ENCODE measurements at regions of chr2 and their contacts with region 1.

Region 1: DNA sequence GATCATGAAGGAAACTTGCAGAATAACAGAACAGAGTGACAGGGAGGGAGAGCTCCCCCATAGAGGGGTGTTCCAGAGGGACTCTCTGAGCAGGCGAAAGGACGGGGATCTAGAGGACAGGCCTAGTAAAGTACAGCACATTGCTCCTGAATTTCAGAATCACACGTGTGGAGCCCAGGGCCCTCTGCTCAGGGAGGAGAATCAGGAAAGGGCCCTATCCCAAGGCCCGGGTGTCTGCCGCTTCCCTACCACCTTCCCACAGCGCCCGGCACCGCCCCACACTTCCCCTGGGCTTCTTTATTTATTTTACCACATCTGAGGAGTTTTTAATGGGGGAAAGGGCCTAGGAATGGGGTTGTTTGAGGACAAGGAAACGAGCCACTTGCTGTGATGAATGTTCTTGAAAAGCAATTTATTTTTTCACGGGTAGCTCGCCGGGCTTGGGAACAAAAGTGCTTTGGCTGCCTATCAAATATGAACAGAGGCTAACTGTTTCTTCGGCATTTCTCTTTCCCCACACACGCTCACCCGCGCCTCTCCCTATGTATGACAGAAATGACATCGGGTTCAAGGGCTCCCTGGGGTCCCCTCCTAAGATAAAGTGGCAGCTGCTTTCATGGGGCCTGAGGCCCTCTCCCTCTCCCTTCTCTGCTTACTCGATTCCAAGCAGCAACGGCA is 79.3 kb upstream of the GLI2 start:
- DNase-seq: peak in 1 of 10 donors; percentile 50

Region 2: DNA sequence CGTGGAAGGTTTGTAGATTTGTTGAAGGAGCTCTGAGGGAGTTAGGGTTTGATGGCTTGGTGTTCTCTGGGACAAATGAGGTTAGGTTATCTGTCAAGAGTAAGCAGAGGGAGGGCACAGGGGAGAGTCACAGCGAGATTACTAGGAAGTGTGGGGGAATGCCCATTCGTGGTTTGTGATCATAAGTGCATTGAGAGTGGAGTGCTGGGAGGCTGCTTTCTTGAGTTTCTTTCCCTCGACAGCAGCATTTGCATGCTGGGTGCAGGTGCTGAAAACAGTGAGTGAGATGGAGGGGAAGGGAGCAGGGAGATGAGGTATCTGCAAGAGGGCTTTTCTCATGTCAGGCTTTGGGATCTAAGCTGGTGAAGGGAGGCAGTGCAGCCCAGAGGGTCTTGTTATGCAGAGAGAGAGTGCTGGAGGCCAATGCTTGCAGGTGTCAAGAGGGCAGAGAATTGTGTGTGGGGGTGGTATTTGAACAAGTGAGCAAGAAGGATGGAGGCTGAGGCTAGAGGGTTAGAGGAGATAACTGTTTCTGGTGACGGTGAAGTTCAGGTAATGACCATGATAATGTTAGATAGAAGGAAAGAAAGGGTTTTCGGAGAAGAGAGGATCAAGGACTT is 394.9 kb before region 1 on chr2:
- intact Hi-C with region 1: no loop called
- DNase-seq: no peak

Region 3: DNA sequence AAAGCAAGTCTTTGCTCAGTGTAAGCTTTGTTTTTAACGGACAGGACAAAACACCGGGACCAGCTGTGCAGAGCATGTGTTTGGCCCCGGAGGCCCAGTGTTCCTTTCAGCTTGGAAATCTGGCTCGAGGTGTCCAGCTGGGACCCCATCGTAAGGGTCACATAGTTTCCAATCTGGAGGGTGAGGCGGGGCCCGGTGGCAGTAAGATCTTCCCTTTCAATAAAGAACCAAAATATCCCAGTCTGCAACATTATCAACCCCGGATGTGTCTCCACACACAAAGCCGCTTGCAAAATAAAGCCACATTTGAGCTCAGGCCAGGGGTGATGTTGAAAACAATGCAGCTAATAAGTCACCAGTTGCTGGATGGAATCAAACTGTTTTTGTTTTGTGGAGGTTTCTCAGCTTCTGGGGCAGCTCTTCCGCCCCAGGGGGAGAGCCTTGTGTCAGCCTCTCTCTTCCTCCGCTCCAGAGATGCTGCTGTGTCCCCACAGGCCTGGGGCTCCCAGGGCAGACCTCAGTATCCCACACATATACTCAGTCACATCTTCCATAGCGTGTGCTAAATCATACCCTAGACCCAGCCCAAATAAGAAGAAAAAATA is 59.3 kb before region 1 on chr2:
- intact Hi-C with region 1: loop called (anchors 10 kb)
- DNase-seq: peak in 4 of 10 donors; percentile 36 to 73 (median 67)

Region 4: GRCh38 chr2:121104721-121105141 is 448.3 kb after region 1 on chr2:
- intact Hi-C with region 1: no loop called
- DNase-seq: no peak